OCI-LY7 (cell line): ENCODE measurements at regions of chr1 and their contacts with region 1.

Region 1: GRCh38 chr1:50620680-50621329 is 197.6 kb upstream of the DMRTA2 start:
- DNase-seq: peak; percentile 24
- H3K4me3 ChIP-seq: no peak overlapping the region
- H3K27ac ChIP-seq: no peak overlapping the region
- H3K4me1 ChIP-seq: no peaks in the 10 kb centered on the region
- CTCF ChIP-seq: peak; percentile 72

Region 2: DNA sequence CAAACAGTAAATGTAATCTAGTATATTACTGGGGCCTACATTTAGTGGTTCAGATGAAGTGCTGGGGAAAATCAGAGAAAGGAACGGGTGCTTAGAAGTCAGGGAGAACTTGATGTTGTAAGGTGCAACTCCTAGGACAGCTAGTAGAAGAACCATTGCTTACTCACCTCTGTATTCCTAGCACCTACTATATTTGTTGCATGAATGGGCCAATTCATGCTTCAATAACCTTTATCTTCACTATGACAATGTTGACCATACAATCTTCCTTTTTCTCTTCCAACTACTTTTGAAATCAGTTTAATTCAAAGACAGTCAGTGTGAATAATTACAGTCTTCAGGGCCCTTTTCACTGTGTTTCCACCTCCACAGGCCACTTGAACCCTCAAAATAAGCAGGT is 72.6 kb before region 1 on chr1:
- CTCF ChIA-PET with region 1: no interaction called
- POLR2A ChIA-PET with region 1: no interaction called
- intact Hi-C with region 1: no loop called
- DNase-seq: no peak
- H3K4me3 ChIP-seq: no peak overlapping the region
- H3K27ac ChIP-seq: no peak overlapping the region
- H3K4me1 ChIP-seq: no peaks in the 10 kb centered on the region
- CTCF ChIP-seq: no peak

Region 3: GRCh38 chr1:50634251-50634650 is 13.4 kb after region 1 on chr1:
- CTCF ChIA-PET with region 1: no interaction called
- POLR2A ChIA-PET with region 1: interaction called, 10 read pairs
- intact Hi-C with region 1: no loop called
- DNase-seq: no peak
- H3K4me3 ChIP-seq: no peak overlapping the region
- H3K27ac ChIP-seq: no peak overlapping the region
- H3K4me1 ChIP-seq: no peaks in the 10 kb centered on the region
- CTCF ChIP-seq: no peak